CD8-positive, alpha-beta memory T cell (primary cell): ENCODE measurements at regions of chr2 and their contacts with region 1.

Region 1: DNA sequence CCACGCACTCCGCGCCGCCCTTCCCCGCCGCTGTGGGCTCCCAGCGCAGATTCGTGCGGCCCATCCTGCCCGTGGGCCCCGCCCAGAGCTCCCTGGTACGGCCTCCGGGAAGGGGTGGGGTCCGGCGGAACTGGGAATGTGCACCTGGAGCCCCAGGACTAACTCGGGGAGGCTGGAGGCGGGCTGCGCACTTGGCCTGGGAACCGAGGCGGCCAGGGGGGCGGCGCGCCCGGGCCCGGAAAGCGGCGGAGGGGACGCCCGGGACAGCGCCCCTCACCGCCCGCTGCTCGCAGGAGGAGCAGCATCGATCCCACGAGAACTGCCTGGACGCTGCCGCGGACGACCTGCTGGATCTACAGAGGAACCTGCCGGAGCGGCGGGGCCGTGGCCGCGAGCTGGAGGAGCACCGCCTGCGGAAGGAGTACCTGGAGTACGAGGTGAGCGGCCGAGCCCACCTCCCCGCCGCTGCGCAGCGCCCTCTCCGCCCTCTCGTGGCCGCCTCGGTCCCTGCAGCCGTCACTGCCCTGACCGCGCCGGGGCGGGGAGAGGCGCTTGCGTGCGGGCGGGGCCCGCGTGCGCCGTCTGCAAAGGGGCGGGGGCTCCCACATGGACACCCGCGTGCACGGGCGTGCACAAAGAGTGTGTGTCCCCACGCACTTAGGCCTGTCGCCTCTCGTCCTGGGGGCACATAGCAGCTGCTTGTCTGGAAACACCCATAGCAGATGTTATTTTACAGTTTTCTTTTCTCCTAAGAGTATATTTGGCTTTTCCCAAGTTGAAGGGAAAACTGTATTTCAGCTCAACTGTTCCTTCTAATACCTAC is 25.2 kb downstream of the PSD4 start:
- DNase-seq: peak; percentile 56 to 83 (median 63)
- H3K4me3 ChIP-seq: no peak overlapping the region
- H3K4me3 Mint-ChIP-seq: no peak overlapping the region
- H3K27ac ChIP-seq: no peak overlapping the region
- H3K27ac Mint-ChIP-seq: peak overlapping the region in 3 of 8 donors; percentile 17 to 75 (median 64)
- H3K4me1 ChIP-seq: peaks cover 10% of the 10 kb centered on the region
- H3K4me1 Mint-ChIP-seq: peaks cover 12 to 40% (median 17%) of the 10 kb centered on the region in 3 donors
- H3K27me3 ChIP-seq: no peaks in the 10 kb centered on the region
- H3K27me3 Mint-ChIP-seq: no peaks in the 10 kb centered on the region

Region 2: DNA sequence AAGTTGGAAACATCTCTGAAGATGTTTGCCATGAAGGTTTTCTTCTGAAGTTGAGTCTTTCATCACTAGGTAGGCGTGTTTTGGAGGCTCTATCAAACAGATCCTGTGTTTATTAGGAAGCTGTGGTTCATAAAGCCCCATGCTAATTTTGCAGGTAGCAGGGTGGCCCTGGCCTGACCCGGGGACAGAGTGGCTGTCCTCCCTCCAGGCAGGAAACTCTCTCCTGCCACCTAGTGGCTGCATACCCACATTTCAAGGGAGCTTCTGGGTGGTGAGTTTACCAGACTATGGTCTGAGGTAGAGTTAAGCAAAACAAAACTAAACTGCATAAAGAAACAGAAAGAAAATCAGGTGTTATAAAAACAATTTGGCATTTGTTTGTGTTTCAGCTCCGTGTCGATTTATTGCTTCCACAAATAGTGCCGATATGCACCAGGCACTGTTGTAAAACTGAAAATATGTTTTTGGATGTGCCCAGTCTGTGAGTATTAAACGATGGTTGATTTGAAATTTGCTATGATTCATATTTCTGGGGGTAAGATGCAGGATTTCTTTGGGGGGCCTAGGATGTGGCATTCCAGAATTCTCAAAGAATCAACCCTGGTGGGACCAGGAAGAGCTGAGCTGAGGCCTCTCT is 314.0 kb before region 1 on chr2:
- CTCF ChIA-PET with region 1: no interaction called
- POLR2A ChIA-PET with region 1: no interaction called
- DNase-seq: peak; percentile 37 to 75 (median 52)
- H3K4me3 ChIP-seq: no peak overlapping the region
- H3K4me3 Mint-ChIP-seq: peak overlapping the region in 2 of 7 donors; percentile 5 to 20
- H3K27ac ChIP-seq: no peak overlapping the region
- H3K27ac Mint-ChIP-seq: peak overlapping the region in 4 of 8 donors; percentile 36 to 71 (median 50)
- H3K4me1 ChIP-seq: no peaks in the 10 kb centered on the region
- H3K4me1 Mint-ChIP-seq: peaks cover 7 to 16% (median 8%) of the 10 kb centered on the region in 3 donors
- H3K27me3 ChIP-seq: no peaks in the 10 kb centered on the region
- H3K27me3 Mint-ChIP-seq: no peaks in the 10 kb centered on the region

Region 3: GRCh38 chr2:113148606-113149560 is 50.1 kb before region 1 on chr2:
- CTCF ChIA-PET with region 1: interaction called, 470 read pairs
- POLR2A ChIA-PET with region 1: no interaction called
- DNase-seq: no peak
- H3K4me3 ChIP-seq: no peak overlapping the region
- H3K4me3 Mint-ChIP-seq: no peak overlapping the region
- H3K27ac ChIP-seq: no peak overlapping the region
- H3K27ac Mint-ChIP-seq: no peak overlapping the region
- H3K4me1 ChIP-seq: no peaks in the 10 kb centered on the region
- H3K4me1 Mint-ChIP-seq: no peaks in the 10 kb centered on the region
- H3K27me3 ChIP-seq: no peaks in the 10 kb centered on the region
- H3K27me3 Mint-ChIP-seq: peaks cover 0 to 6% of the 10 kb centered on the region in 2 donors

Region 4: DNA sequence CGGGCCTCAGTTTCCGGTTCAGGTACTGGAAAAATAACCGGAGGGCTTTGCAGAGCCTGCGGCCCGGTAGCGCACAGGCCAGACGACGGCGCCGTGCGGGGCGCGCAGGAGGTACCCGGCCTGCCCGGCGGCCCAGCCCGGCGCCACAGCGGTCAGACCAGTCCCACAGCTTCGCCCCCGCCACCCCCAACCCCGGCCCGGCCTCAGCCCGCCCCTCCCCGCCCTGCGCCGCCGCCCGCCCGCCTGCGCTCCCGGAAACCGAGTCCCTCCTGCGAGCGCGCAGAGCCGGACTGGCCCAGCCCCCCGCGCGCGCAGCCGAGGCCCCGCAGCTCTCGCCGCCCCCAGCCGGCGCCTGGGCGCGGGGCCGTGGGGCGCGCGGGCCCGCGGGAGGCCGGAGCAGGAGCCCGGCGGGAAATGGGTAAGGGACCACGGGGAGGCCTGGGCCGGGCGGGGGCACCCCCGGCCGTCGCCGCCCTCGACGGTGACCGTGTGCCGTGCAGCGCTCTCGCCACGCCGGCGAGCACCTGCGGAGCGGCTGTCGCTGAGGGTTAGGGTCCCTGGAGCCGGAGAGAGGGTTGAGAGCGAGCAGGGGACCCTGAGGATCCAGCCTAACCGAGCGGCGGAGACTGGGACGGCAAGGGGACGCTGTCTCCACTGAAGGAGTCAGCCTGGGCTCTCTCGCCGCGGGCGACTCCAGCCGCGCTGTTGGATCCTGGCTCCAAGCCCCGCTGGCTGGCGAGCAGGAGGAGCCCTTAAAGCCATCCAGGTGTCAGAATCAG is 41.7 kb before region 1 on chr2:
- CTCF ChIA-PET with region 1: interaction called, 38 read pairs
- POLR2A ChIA-PET with region 1: interaction called, 3 read pairs
- DNase-seq: peak in 4 of 5 donors; percentile 30 to 66 (median 48)
- H3K4me3 ChIP-seq: peak overlapping the region; percentile 71
- H3K4me3 Mint-ChIP-seq: peak overlapping the region; percentile 85 to 94 (median 90)
- H3K27ac ChIP-seq: peak overlapping the region; percentile 24
- H3K27ac Mint-ChIP-seq: peak overlapping the region in 7 of 8 donors; percentile 22 to 92 (median 81)
- H3K4me1 ChIP-seq: peaks cover 25% of the 10 kb centered on the region
- H3K4me1 Mint-ChIP-seq: peaks cover 17 to 31% (median 27%) of the 10 kb centered on the region in 3 donors
- H3K27me3 ChIP-seq: no peaks in the 10 kb centered on the region
- H3K27me3 Mint-ChIP-seq: no peaks in the 10 kb centered on the region

Region 5: DNA sequence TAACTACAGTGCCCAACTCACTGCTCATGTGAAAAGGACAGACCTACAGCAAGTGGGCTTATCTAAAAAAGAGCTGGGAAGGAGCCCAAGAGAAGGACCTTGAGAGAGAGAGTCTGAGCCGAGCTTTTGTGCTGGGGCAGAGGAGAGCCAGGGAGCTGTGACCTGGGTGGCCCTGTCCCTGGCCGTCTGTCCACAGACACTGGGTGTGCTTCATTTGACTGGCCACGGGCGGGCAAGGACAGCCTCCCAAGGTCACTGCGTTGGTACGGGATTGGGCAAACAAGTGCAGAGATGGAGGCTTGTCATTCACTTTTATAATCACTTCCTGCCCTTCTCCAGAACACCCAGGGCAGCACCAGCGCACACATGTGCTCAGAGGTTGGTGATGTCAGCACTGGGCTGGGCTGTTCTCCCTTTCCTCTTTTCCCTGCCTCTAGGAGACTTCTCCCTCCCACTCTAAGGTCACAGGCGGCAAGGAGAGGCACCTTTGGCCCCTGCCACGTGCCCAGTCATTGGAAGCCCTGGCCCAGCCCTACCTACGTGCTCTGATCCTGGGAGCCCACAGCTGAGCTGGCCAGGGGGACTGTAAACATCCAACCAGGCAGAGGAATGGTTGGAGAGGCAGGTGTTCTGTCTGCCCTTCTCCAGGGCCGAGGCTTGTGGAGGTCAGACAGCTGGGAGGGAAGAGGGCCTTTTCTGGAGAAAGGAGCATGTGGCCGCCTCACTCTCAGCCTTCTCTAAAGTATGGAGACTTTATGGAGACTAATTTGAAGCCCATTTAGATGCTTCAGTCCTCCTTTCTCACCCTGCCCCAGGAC is 31.7 kb before region 1 on chr2:
- CTCF ChIA-PET with region 1: interaction called, 135 read pairs
- POLR2A ChIA-PET with region 1: no interaction called
- DNase-seq: peak in 2 of 5 donors; percentile 50 to 58
- H3K4me3 ChIP-seq: peak overlapping the region; percentile 57
- H3K4me3 Mint-ChIP-seq: peak overlapping the region; percentile 1 to 75 (median 63)
- H3K27ac ChIP-seq: no peak overlapping the region
- H3K27ac Mint-ChIP-seq: peak overlapping the region; percentile 79 to 98 (median 92)
- H3K4me1 ChIP-seq: peaks cover 65% of the 10 kb centered on the region
- H3K4me1 Mint-ChIP-seq: peaks cover 56 to 76% (median 74%) of the 10 kb centered on the region in 3 donors
- H3K27me3 ChIP-seq: no peaks in the 10 kb centered on the region
- H3K27me3 Mint-ChIP-seq: no peaks in the 10 kb centered on the region

Region 6: GRCh38 chr2:113173542-113174395 is 25.2 kb before region 1 on chr2 and contains the start of gene PSD4:
- CTCF ChIA-PET with region 1: interaction called, 135 read pairs
- POLR2A ChIA-PET with region 1: interaction called, 15 read pairs
- DNase-seq: peak; percentile 77 to 94 (median 91)
- H3K4me3 ChIP-seq: peak within 1 kb of the TSS; percentile 88
- H3K4me3 Mint-ChIP-seq: peak within 1 kb of the TSS; percentile 89 to 95 (median 93)
- H3K27ac ChIP-seq: peak within 1 kb of the TSS; percentile 77
- H3K27ac Mint-ChIP-seq: peak within 1 kb of the TSS; percentile 86 to 98 (median 94)
- H3K4me1 ChIP-seq: peaks cover 76% of the 10 kb centered on the region
- H3K4me1 Mint-ChIP-seq: peaks cover 70 to 87% (median 76%) of the 10 kb centered on the region in 3 donors
- H3K27me3 ChIP-seq: no peaks in the 10 kb centered on the region
- H3K27me3 Mint-ChIP-seq: peaks cover 0 to 3% of the 10 kb centered on the region in 2 donors
- total RNA-seq, gene PSD4: 192 to 193 TPM